Calu3 (cell line): ENCODE measurements at regions of chr3 and their contacts with region 1.

Region 1: DNA sequence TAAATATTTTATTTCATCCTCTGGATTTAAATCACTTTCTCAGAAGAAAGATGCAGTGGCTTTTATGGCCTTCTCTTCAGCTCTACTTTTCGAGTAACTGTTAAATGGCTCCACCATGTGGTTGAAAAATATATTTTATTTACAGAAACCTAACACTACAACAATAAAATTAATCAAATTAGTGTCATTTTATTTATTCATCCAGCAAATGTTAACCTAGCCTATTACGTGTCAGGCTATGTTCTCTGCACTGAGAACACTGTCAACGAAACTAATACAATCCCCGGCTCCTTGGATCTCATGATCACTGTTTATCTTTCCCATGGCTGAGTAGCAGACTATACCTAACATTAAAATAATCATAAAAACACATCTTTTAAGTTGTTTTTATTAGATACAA is 148.0 kb upstream of the OSTN start:
- DNase-seq: no peak
- H3K4me3 Mint-ChIP-seq: no peak overlapping the region
- H3K27ac Mint-ChIP-seq: no peak overlapping the region
- H3K4me1 Mint-ChIP-seq: no peaks in the 10 kb centered on the region
- H3K27me3 Mint-ChIP-seq: no peaks in the 10 kb centered on the region
- CTCF ChIP-seq: peak; percentile 39

Region 2: DNA sequence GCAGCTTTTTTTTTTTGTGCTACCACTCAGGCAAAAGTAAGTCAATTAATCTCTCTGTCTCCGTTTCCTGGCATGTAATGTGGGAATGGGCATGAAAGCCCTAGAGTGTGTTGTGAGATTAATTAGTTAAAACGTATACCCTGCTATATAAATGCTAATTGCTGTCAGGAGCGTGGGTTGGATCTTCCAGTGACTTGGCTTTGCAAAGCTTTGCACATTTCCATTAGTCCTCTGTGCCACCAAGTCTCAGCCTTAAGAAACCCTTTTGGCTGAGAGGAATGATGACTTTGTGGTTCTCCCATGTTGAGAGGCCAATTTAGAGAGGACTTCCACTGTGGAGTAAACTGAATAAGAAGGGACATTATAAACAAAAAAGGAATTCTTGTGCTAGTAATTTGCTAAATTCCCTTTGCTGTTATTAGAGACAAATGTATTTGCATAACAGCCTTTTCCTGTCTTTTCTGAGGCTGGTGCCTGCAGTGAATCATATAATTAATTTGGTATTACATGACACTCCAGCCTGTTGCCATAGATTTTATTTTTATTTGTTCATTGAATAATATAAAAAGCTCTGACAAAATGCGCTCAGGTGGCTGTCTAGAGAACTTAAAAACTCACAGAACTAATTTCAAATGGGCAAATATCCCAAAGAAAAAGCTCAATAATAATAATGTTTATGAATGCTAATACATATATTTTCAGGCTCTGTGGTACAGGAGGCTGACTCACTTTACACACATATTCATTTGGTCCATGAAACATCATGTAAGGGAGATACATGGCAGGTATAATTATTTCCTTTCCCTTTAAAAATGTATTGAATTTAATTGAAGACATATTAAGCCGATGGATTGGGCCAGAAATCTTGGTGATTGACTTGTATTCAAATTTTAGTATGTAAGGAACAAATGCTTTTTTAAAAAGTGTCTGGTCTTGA is 454.4 kb before region 1 on chr3:
- CTCF ChIA-PET with region 1: no interaction called
- intact Hi-C with region 1: no loop called
- DNase-seq: no peak
- H3K4me3 Mint-ChIP-seq: peak overlapping the region; percentile 42
- H3K27ac Mint-ChIP-seq: peak overlapping the region; percentile 87
- H3K4me1 Mint-ChIP-seq: peaks cover 71% of the 10 kb centered on the region
- H3K27me3 Mint-ChIP-seq: no peaks in the 10 kb centered on the region
- CTCF ChIP-seq: no peak

Region 3: DNA sequence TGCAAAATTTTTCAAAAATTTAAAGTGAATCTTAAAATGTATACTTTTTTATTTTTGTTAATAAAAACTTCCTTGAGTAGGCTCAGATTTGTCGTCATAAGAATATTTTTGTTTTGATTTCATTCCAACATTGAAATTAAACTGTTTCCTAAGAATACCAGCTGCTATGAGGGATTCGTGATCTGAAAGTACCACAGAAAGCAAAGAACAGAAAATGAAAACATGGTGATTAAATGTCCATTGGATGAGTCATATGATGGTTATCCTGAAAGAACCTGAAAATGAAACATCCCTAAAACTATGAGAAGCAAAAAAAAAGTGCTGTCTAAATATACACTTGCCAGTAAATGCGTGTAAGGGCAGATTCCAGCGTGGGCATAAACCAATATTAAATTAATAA is 332.4 kb before region 1 on chr3:
- CTCF ChIA-PET with region 1: no interaction called
- intact Hi-C with region 1: loop called (anchors 5 kb)
- DNase-seq: no peak
- H3K4me3 Mint-ChIP-seq: no peak overlapping the region
- H3K27ac Mint-ChIP-seq: no peak overlapping the region
- H3K4me1 Mint-ChIP-seq: peaks cover 9% of the 10 kb centered on the region
- H3K27me3 Mint-ChIP-seq: no peaks in the 10 kb centered on the region
- CTCF ChIP-seq: no peak

Region 4: DNA sequence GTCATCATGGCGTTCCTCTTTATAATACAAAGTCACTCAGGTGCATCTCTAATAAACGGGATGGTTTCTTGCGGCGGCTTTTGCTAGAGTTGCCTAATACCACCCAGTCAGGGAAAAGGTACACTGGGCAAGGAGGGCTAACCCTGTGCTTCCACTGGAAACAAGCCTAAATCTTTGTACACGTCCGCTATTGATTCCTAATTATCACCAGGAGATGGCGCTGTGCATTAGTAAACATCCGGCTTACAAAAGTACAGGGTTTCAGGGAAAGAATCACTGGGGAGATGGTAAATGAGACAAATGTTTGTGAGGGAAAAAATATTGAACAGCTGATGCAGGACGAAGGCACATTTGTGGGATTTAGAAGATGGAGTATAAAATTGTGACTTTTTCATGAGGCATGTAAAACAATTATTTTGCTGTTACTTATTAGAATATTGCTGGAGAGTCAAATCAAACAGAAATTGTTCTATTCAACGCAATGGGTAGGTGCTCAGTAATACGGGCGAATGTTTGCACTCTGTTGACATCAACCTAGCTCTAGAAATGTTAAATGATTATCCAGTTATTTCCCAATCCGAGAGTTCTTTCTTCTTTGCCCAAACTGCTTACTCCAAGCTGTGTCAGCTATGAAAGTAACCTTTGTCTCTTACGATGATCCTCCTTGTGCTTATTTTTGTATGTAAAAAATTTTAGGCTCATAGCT is 239.1 kb before region 1 on chr3:
- CTCF ChIA-PET with region 1: interaction called, 7 read pairs
- intact Hi-C with region 1: loop called (anchors 1 kb)
- DNase-seq: peak; percentile 72
- H3K4me3 Mint-ChIP-seq: peak overlapping the region; percentile 69
- H3K27ac Mint-ChIP-seq: peak overlapping the region; percentile 59
- H3K4me1 Mint-ChIP-seq: peaks cover 23% of the 10 kb centered on the region
- H3K27me3 Mint-ChIP-seq: no peaks in the 10 kb centered on the region
- CTCF ChIP-seq: peak; percentile 90

Region 5: DNA sequence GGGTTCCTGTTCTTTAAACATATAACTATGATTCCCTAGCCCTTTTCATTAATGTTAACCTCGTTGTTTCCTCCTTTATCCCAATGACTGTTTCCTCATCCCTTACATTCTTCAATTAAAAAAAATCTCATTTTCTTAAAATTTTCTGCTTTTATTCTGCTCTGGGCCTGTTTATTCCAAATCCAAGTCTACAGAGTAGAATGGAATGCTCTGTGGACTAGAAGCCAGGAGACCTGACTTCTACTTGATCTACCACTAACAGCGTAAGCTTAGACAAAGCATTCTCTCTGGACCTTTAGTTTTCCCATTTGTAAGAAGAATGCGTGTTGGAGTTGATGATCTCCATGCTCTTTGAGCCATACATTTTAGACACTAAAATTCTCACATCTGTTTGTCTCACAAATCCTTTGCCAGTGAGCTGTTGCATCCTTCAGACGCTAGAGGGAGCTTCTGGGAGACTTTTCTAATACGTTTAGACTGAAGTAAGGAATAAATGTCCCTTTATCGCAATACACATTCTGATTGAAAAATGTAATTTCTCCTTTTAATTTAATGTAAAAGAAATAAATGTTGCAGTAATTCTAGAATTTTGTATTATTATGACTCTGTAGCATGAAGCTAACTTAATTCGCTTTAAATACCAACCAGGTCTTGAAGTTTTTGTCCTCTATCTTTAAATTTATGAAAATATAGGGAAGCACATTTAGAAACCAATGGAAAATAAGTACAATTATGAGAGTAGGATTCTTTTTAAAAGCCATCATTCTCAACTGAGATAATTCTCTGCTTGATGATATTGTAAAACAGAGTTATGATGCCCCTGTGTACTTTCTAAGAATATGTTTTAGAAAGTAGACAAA is 166.8 kb before region 1 on chr3:
- CTCF ChIA-PET with region 1: interaction called, 33 read pairs
- intact Hi-C with region 1: loop called (anchors 2 kb)
- DNase-seq: peak; percentile 69
- H3K4me3 Mint-ChIP-seq: no peak overlapping the region
- H3K27ac Mint-ChIP-seq: no peak overlapping the region
- H3K4me1 Mint-ChIP-seq: peaks cover 20% of the 10 kb centered on the region
- H3K27me3 Mint-ChIP-seq: no peaks in the 10 kb centered on the region
- CTCF ChIP-seq: peak; percentile 81

Region 6: GRCh38 chr3:192372616-192373015 is 1321.6 kb after region 1 on chr3:
- CTCF ChIA-PET with region 1: no interaction called
- intact Hi-C with region 1: no loop called
- DNase-seq: no peak
- H3K4me3 Mint-ChIP-seq: no peak overlapping the region
- H3K27ac Mint-ChIP-seq: no peak overlapping the region
- H3K4me1 Mint-ChIP-seq: no peaks in the 10 kb centered on the region
- H3K27me3 Mint-ChIP-seq: no peaks in the 10 kb centered on the region
- CTCF ChIP-seq: no peak